ENCODE measurements at regions of chr20 and their contacts with region 1.

Region 1: DNA sequence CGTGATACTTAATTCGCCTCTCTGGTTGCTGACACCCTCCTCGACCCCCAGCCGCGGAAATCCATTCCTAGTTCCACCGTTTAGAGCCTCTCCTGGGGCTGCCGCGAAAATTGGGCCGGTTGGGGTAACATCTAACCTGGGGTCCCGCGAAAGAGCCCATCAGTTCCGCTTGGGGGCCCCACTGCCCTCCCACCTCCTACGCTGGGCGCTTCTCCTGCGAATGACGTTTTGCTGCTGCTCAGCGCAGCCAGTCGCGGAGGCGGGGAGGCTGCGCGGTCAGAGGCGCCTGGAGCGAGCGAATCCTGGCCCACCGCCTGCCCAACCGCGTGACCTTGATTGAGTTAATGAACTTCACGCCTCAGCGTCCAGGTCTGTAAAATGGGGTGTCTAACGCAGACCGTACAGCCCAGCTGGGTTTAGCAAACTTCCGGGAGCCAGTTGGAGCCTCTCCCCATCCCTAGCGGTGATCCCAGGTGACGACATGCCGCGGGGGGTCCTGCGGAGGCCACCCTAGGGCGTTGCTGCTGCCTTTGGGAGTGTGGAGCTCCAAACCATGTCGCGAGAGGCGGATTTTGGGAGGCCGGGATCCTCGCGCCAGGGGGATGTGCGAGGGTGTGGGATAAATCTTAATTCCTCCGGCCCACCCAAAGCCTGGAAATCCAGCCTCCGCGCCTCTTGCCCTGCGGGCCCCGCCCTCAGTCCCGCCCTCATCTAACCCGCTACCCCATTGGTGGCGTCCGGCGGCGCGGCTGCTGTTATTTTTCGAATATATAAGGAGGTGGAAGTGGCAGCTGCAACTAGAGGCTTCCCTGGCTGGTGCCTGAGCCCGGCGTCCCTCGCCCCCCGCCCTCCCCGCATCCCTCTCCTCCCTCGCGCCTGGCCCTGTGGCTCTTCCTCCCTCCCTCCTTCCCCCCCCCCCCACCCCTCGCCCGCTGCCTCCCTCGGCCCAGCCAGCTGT is at the start of gene CDC25B:
- DNase-seq: peak; percentile 75 to 91
- H3K4me3 ChIP-seq: peak within 1 kb of the TSS; percentile 95
- H3K27ac ChIP-seq: peak within 1 kb of the TSS; percentile 35; the same call in 1 of the 2 replicates
- H3K4me1 ChIP-seq: peaks cover 15% of the 10 kb centered on the region
- H3K27me3 ChIP-seq: no peaks in the 10 kb centered on the region
- CTCF ChIP-seq: peak; percentile 54; the same call in 1 of the 2 replicates
- total RNA-seq, gene CDC25B: 83.5 and 91.0 TPM in 2 replicates

Region 2: GRCh38 chr20:3811467-3812258 is 15.9 kb after region 1 on chr20:
- CTCF ChIA-PET with region 1: no interaction called
- POLR2A ChIA-PET with region 1: interaction called, 4 read pairs
- intact Hi-C with region 1: loop called (anchors 1 kb)
- DNase-seq: peak; percentile 92 to 100
- H3K4me3 ChIP-seq: peak overlapping the region; percentile 50
- H3K27ac ChIP-seq: peak overlapping the region; percentile 83
- H3K4me1 ChIP-seq: peaks cover 54% of the 10 kb centered on the region
- H3K27me3 ChIP-seq: no peaks in the 10 kb centered on the region
- CTCF ChIP-seq: no peak

Measured in PC-9 (cell line).